ENCODE measurements at regions of chr5 and their contacts with region 1.

Region 1: GRCh38 chr5:139137702-139138101 is 60.5 kb downstream of the SIL1 start:
- DNase-seq: peak in 1 of 10 donors; percentile 40
- H3K4me3 ChIP-seq: no peak overlapping the region
- H3K27ac ChIP-seq: peak overlapping the region in 34 of 59 donors; percentile 11 to 90 (median 66)
- H3K27me3 ChIP-seq: no peaks in the 10 kb centered on the region
- CTCF ChIP-seq: peak in 47 of 56 donors; percentile 13 to 58 (median 39)

Region 2: GRCh38 chr5:138953387-138954256 is 184.1 kb before region 1 on chr5:
- intact Hi-C with region 1: loop called in 1 of 2 experiments (anchors 10 kb)
- DNase-seq: peak; percentile 69 to 95 (median 92)
- H3K4me3 ChIP-seq: peak overlapping the region in 27 of 59 donors; percentile 1 to 43 (median 19)
- H3K27ac ChIP-seq: peak overlapping the region; percentile 78 to 99 (median 96)
- H3K27me3 ChIP-seq: no peaks in the 10 kb centered on the region
- CTCF ChIP-seq: peak in 7 of 56 donors; percentile 2 to 19 (median 13)